WTC11 (cell line): ENCODE measurements at regions of chr10 and their contacts with region 1.

Region 1: DNA sequence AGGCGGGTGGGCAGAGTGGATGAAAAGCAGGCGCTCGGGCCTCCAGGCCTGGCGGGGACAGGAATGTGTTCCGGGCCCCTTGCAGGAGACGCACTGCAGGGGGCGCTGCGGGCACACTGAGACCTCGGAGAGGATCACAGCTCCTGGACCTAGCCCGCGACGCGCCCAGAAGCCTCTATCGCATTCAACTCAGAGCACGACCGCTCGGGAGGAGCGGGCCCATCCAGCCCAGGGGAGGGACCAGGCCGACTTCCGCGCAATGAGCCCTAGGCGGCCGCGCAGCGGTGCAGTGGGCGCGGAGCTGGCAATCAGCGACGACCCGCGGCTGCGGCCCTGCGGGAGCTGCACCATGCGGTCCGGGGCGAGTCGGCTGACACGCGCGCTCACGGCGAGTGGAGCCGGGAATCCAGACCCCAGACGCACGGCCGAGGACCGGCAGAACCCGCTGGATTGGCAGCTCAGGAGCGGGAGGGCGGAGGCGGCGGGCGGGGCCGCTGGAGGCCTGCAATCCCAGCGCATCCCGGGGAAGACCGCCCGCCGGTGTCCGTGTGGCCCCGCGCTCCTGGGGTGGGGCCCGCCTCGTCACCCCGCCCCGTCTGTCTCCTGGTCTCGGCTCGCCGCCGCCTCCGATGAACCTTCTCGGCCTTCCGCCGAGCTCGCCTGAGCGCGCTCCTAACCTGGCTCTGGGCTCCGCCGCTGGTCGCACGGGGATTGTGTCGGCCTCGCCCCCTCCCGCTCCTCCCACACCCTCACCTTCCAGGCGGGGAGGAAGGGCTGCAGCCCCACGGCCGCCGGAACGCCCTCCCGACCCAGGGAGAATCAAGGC is 33.5 kb upstream of the GRID1 start:
- DNase-seq: peak; percentile 98
- ATAC-seq: peak; percentile 94
- H3K4me3 Mint-ChIP-seq: peak overlapping the region; percentile 71
- H3K27ac Mint-ChIP-seq: no peak overlapping the region
- H3K4me1 Mint-ChIP-seq: peaks cover 23% of the 10 kb centered on the region
- H3K27me3 Mint-ChIP-seq: peaks cover 70% of the 10 kb centered on the region
- CTCF ChIP-seq: peak; percentile 71

Region 2: DNA sequence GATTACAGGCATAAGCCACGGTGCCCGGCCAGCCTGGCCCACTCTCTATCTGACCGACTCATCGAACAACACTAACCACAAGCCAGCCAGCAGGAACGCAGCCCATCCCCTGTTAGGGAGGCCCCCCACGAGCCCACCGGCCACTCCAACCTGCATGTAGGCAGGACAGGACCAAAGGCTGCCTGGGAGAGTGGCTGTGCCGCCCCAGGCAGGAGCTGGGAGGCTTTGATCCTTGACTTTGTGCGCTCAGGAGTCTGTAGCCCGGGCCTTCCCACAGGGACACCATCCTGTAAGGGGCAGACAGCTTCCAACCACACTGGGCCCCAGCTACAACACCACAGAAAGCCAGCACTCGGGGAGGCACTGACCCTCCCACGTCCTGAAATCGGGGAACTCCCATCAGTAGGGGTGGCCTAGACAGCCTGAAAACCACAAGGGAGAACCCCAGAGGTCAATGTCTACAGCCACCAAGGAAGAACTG is 62.9 kb before region 1 on chr10:
- CTCF ChIA-PET with region 1: no interaction called
- POLR2A ChIA-PET with region 1: no interaction called
- DNase-seq: no peak
- ATAC-seq: no peak
- H3K4me3 Mint-ChIP-seq: no peak overlapping the region
- H3K27ac Mint-ChIP-seq: no peak overlapping the region
- H3K4me1 Mint-ChIP-seq: peaks cover 24% of the 10 kb centered on the region
- H3K27me3 Mint-ChIP-seq: no peaks in the 10 kb centered on the region
- CTCF ChIP-seq: no peak

Region 3: DNA sequence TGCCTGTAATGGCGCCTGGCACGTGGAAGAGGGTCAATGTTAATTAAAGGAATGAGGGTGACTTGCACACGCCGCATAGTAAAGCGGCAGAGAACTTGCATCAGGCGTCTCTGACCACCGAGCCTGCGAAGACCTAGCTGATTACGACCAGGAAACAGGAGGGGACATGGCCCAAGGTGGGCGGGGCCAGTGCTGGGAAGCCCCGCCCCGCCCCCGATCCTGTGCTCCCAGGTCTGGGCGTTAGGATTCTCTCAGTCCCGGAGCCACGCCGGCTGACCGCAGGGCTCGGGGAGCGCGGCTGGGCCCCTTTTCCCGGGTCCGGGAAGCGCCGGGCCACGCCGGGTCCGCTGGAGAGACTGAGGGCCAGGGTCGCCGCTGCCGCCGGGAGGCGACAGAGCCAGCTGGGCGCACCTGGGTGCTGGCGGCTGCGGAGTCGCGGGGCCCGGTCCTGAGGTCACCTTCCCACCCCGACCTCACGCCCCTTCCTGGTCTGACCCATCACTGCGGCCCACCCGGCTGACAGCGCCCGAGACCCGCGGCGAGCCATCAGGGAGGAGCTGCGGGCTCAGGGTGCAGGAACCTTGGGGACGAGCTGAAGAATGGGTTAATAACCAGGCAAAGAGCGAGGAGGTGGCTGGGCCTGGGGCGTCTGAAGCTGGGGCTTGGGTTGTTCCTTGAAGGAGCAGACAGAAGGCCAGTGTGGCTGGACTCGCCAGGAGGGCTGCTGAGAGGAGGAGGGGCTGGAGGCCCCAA is 10.5 kb before region 1 on chr10:
- CTCF ChIA-PET with region 1: interaction called, 48 read pairs
- POLR2A ChIA-PET with region 1: interaction called, 20 read pairs
- DNase-seq: peak; percentile 93
- ATAC-seq: peak; percentile 96
- H3K4me3 Mint-ChIP-seq: peak overlapping the region; percentile 72
- H3K27ac Mint-ChIP-seq: peak overlapping the region; percentile 60; the same call in 1 of the 2 replicates
- H3K4me1 Mint-ChIP-seq: peaks cover 24% of the 10 kb centered on the region
- H3K27me3 Mint-ChIP-seq: peaks cover 52% of the 10 kb centered on the region
- CTCF ChIP-seq: no peak

Region 4: DNA sequence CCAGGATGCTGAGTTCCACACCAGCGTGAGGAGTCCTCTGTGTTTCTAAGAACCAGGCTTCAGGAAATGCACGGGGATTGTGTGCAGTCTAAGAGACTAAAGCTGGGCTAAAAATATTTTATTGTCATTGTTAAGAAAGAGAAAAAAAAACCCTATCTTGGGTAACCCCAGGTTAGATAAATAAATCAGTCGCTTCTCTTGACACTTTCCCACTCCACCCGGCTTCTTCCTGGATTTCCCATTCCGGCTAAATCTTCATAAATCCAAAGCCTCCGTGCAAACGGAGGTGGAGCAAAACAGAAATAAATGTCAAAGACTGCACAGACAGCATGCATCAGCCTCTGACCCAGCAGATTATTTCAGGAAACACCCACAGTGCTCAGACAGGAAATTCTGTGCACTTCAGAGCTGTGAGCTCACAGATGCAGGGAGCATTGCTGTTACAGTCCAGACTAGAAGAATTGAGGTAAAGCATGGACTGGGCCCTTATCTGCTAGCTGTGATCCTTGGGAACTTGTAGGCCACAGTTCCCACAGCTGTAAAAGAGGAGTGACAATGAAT is 11.3 kb after region 1 on chr10:
- CTCF ChIA-PET with region 1: interaction called, 15 read pairs
- POLR2A ChIA-PET with region 1: no interaction called
- DNase-seq: no peak
- ATAC-seq: no peak
- H3K4me3 Mint-ChIP-seq: no peak overlapping the region
- H3K27ac Mint-ChIP-seq: no peak overlapping the region
- H3K4me1 Mint-ChIP-seq: peaks cover 8% of the 10 kb centered on the region
- H3K27me3 Mint-ChIP-seq: no peaks in the 10 kb centered on the region; the same call in 1 of the 2 replicates
- CTCF ChIP-seq: no peak

Region 5: DNA sequence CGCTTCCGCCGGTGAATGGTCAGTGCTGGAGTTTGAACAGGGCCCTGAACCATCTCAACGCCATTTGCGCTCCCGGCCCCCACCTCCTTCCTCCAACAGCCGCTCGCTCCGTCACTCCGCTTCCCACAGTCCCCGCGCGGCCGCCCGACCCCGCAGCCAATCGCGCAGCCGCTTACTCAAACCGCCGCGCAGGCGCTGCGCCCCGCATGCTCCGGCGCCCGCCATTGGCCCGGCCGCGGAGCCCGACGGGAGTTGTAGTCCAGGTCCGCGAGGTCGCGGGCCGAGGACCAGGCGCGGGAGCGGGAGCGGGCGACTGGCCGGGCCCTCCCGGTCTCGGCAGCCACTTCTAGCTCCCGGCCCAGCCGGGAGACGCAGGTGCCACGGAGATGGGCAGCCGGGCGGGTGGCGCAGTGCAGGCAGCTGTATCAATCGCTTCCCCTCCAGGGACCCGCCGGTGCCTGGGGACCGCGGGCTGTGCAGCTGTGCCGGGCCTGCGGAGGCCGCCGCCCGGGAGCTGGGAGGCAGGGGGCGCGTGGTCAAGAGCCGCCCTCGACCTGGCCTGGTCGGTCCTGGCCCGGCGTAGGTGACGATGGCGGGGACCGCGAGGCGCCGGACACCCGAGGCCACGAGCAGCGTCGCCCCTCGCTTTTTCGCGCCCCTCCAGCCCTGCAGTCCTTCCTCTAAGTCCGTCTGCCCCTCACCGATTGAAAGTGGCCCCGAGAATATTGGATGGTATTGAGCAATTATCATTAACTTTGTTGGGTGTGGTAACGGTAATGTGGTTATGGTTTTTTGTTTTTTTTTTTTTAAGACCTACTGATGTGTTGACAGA is 121.8 kb after region 1 on chr10 and contains the start of gene WAPL:
- CTCF ChIA-PET with region 1: interaction called, 17 read pairs
- POLR2A ChIA-PET with region 1: interaction called, 3 read pairs
- DNase-seq: peak; percentile 95
- ATAC-seq: peak; percentile 93
- H3K4me3 Mint-ChIP-seq: peak within 1 kb of the TSS; percentile 95
- H3K27ac Mint-ChIP-seq: peak within 1 kb of the TSS; percentile 86
- H3K4me1 Mint-ChIP-seq: peaks cover 31% of the 10 kb centered on the region
- H3K27me3 Mint-ChIP-seq: no peaks in the 10 kb centered on the region
- CTCF ChIP-seq: no peak
- total RNA-seq, gene WAPL: 41.7 to 48.0 TPM (median 41.8 TPM) in 3 replicates

Region 6: GRCh38 chr10:86535057-86535882 is 135.2 kb after region 1 on chr10:
- CTCF ChIA-PET with region 1: interaction called, 24 read pairs
- POLR2A ChIA-PET with region 1: interaction called, 3 read pairs
- DNase-seq: peak; percentile 75
- ATAC-seq: peak; percentile 87
- H3K4me3 Mint-ChIP-seq: peak overlapping the region; percentile 77
- H3K27ac Mint-ChIP-seq: no peak overlapping the region
- H3K4me1 Mint-ChIP-seq: peaks cover 22% of the 10 kb centered on the region
- H3K27me3 Mint-ChIP-seq: peaks cover 28% of the 10 kb centered on the region
- CTCF ChIP-seq: no peak

Region 7: GRCh38 chr10:86585037-86585725 is 185.1 kb after region 1 on chr10:
- CTCF ChIA-PET with region 1: interaction called, 75 read pairs
- POLR2A ChIA-PET with region 1: no interaction called
- DNase-seq: peak; percentile 90
- ATAC-seq: peak; percentile 94
- H3K4me3 Mint-ChIP-seq: no peak overlapping the region
- H3K27ac Mint-ChIP-seq: no peak overlapping the region
- H3K4me1 Mint-ChIP-seq: peaks cover 3% of the 10 kb centered on the region; the same call in 1 of the 2 replicates
- H3K27me3 Mint-ChIP-seq: no peaks in the 10 kb centered on the region; the same call in 1 of the 2 replicates
- CTCF ChIP-seq: peak; percentile 87

Region 8: GRCh38 chr10:86632009-86632800 is 232.1 kb after region 1 on chr10:
- CTCF ChIA-PET with region 1: interaction called, 11 read pairs
- POLR2A ChIA-PET with region 1: no interaction called
- DNase-seq: peak; percentile 86
- ATAC-seq: peak; percentile 98
- H3K4me3 Mint-ChIP-seq: peak overlapping the region; percentile 70
- H3K27ac Mint-ChIP-seq: no peak overlapping the region
- H3K4me1 Mint-ChIP-seq: peaks cover 15% of the 10 kb centered on the region
- H3K27me3 Mint-ChIP-seq: peaks cover 27% of the 10 kb centered on the region
- CTCF ChIP-seq: no peak